Panc1 (cell line): ENCODE measurements at regions of chr7 and their contacts with region 1.

Region 1: GRCh38 chr7:73726083-73726466 is 6.6 kb upstream of the STX1A start:
- DNase-seq: no peak
- ATAC-seq: peak; percentile 46
- H3K4me3 ChIP-seq: no peak overlapping the region
- H3K27ac ChIP-seq: no peak overlapping the region
- H3K4me1 ChIP-seq: peaks cover 14% of the 10 kb centered on the region
- H3K27me3 ChIP-seq: no peaks in the 10 kb centered on the region
- CTCF ChIP-seq: no peak; the same call in none of the 2 replicates

Region 2: GRCh38 chr7:73351447-73352167 is 374.5 kb before region 1 on chr7:
- CTCF ChIA-PET with region 1: no interaction called
- POLR2A ChIA-PET with region 1: no interaction called
- in situ Hi-C with region 1: no loop called
- intact Hi-C with region 1: no loop called
- DNase-seq: no peak
- ATAC-seq: no peak
- H3K4me3 ChIP-seq: no peak overlapping the region
- H3K27ac ChIP-seq: no peak overlapping the region
- H3K4me1 ChIP-seq: no peaks in the 10 kb centered on the region
- H3K27me3 ChIP-seq: no peaks in the 10 kb centered on the region
- CTCF ChIP-seq: no peak

Region 3: DNA sequence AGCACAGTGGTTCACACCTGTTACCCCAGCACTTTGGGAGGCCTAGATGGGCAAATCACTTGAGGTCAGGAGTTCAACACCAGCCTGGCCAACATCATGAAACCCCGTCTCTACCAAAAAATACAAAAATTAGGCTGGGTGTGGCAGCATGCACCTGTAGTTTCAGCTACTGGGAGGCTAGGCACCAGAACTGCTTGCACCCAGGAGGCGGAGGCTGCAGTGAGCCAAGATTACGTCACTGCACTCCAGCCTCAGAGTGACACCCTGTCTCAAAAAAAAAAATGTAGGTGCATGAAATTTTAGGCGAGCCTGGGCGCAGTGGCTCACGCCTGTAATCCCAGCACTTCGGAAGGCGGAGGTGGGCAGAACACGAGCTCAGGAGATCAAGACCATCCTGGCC is 178.2 kb before region 1 on chr7:
- CTCF ChIA-PET with region 1: no interaction called
- POLR2A ChIA-PET with region 1: no interaction called
- in situ Hi-C with region 1: no loop called
- intact Hi-C with region 1: no loop called
- DNase-seq: no peak
- ATAC-seq: no peak
- H3K4me3 ChIP-seq: no peak overlapping the region
- H3K27ac ChIP-seq: no peak overlapping the region
- H3K4me1 ChIP-seq: no peaks in the 10 kb centered on the region
- H3K27me3 ChIP-seq: no peaks in the 10 kb centered on the region
- CTCF ChIP-seq: no peak

Region 4: GRCh38 chr7:73612598-73613269 is 113.3 kb before region 1 on chr7:
- CTCF ChIA-PET with region 1: interaction called, 11 read pairs
- POLR2A ChIA-PET with region 1: no interaction called
- in situ Hi-C with region 1: no loop called
- intact Hi-C with region 1: loop called (anchors 5 kb)
- DNase-seq: no peak
- ATAC-seq: peak; percentile 80
- H3K4me3 ChIP-seq: no peak overlapping the region
- H3K27ac ChIP-seq: no peak overlapping the region
- H3K4me1 ChIP-seq: peaks cover 10% of the 10 kb centered on the region
- H3K27me3 ChIP-seq: no peaks in the 10 kb centered on the region
- CTCF ChIP-seq: no peak; the same call in 1 of the 2 replicates

Region 5: GRCh38 chr7:73699370-73700069 is 26.6 kb before region 1 on chr7:
- CTCF ChIA-PET with region 1: interaction called, 10 read pairs
- POLR2A ChIA-PET with region 1: no interaction called
- in situ Hi-C with region 1: no loop called
- intact Hi-C with region 1: no loop called
- DNase-seq: no peak
- ATAC-seq: peak; percentile 13
- H3K4me3 ChIP-seq: no peak overlapping the region
- H3K27ac ChIP-seq: peak overlapping the region; percentile 80
- H3K4me1 ChIP-seq: peaks cover 49% of the 10 kb centered on the region
- H3K27me3 ChIP-seq: no peaks in the 10 kb centered on the region
- CTCF ChIP-seq: no peak

Region 6: GRCh38 chr7:73742693-73743595 is 16.9 kb after region 1 on chr7:
- CTCF ChIA-PET with region 1: no interaction called
- POLR2A ChIA-PET with region 1: no interaction called
- in situ Hi-C with region 1: no loop called
- intact Hi-C with region 1: no loop called
- DNase-seq: no peak
- ATAC-seq: peak; percentile 19
- H3K4me3 ChIP-seq: peak overlapping the region in 1 of 2 experiments; percentile 5; a peak in 2 of 4 replicates
- H3K27ac ChIP-seq: peak overlapping the region; percentile 74
- H3K4me1 ChIP-seq: peaks cover 40% of the 10 kb centered on the region
- H3K27me3 ChIP-seq: no peaks in the 10 kb centered on the region
- CTCF ChIP-seq: no peak

Region 7: GRCh38 chr7:73978661-73979563 is 252.8 kb after region 1 on chr7:
- CTCF ChIA-PET with region 1: no interaction called
- POLR2A ChIA-PET with region 1: no interaction called
- in situ Hi-C with region 1: no loop called
- intact Hi-C with region 1: no loop called
- DNase-seq: peak; percentile 2
- ATAC-seq: peak; percentile 79
- H3K4me3 ChIP-seq: no peak overlapping the region
- H3K27ac ChIP-seq: no peak overlapping the region
- H3K4me1 ChIP-seq: peaks cover 8% of the 10 kb centered on the region; the same call in 1 of the 2 replicates
- H3K27me3 ChIP-seq: no peaks in the 10 kb centered on the region
- CTCF ChIP-seq: peak; percentile 78